KBM-7 (cell line): ENCODE measurements at regions of chr1 and their contacts with region 1.

Region 1: DNA sequence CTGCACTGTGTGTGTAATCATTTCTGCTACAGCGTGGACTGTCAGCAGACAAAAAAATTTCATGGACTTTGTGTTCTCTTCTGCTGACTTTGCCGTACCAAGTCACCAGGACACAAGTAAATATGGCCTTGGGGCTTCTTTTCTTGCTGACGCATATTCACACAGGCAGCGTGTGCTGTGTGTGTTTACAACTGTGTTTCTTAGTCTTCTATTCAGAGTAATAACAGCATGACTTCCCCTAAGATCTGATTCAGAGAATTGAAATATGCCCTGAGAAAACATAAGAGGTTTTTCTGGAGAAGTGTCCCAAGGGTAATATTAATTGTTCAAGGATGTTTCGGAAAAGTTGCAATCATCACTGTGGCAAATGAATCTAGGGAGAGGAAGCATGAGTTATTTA is 47.1 kb upstream of the DYNLT5 start:
- DNase-seq: no peak

Region 2: GRCh38 chr1:66119148-66119547 is 586.0 kb before region 1 on chr1:
- in situ Hi-C with region 1: no loop called
- DNase-seq: no peak

Region 3: DNA sequence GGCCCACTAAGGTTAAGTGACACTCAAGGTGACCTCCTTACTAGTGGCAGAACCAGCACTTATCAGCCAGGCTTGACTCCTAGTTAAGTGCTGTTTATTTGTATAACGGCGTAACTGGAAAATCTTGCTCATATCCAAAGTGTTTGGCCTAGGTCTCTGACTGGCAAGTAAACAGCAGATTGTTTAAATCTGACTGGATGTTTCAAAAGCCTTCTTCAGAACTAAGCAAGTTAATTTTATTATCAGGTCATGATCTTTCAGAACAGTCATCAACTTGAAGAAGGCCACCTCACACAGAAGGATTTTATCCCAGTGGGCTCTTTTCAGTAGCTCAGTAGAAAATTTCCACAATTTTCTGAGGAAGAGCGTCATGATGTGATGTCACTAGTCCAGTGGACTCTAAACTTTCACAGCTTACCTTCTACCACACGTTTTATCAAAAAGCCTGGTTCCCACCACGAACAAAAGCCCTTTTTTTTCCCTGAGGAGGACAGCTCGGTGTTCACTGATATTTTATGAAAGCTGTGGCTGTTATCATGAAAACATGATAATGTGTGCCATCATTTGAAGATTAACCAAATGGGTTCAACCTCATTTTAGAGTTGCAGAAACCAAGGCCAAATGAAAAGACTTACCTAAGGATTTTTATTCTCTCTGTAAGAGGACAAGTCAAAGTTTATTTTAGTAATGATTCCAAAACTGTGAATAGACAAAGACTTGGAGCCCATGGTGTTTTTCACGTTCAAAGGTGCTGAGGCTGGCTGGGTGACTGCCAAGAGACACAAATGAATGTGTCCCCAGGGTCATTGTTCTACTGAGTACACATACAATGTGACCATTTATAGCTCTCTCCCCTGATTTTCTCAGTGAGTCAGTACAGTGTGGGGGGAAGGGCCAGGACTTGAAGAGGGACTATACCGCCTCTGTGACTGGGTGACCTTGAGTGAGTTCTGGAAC is 162.0 kb before region 1 on chr1:
- in situ Hi-C with region 1: loop called (anchors 10 kb)
- DNase-seq: no peak